Mammary epithelial cell (primary cell): ENCODE measurements at regions of chr3 and their contacts with region 1.

Region 1: GRCh38 chr3:131669590-131669989 is 166.8 kb upstream of the MRPL3 start:
- DNase-seq: no peak
- H3K4me3 ChIP-seq: no peak overlapping the region
- H3K27ac ChIP-seq: no peak overlapping the region
- H3K4me1 ChIP-seq: no peaks in the 10 kb centered on the region
- H3K27me3 ChIP-seq: peaks cover 2% of the 10 kb centered on the region
- CTCF ChIP-seq: no peak

Region 2: GRCh38 chr3:131705558-131706051 is 36.0 kb after region 1 on chr3:
- CTCF ChIA-PET with region 1: no interaction called
- dilution Hi-C with region 1: loop called (anchors 5 kb)
- in situ Hi-C with region 1: no loop called
- intact Hi-C with region 1: no loop called
- DNase-seq: peak; percentile 39
- H3K4me3 ChIP-seq: no peak overlapping the region
- H3K27ac ChIP-seq: no peak overlapping the region
- H3K4me1 ChIP-seq: no peaks in the 10 kb centered on the region
- H3K27me3 ChIP-seq: no peaks in the 10 kb centered on the region
- CTCF ChIP-seq: no peak